H1 (cell line): ENCODE measurements at regions of chr2 and their contacts with region 1.

Region 1: DNA sequence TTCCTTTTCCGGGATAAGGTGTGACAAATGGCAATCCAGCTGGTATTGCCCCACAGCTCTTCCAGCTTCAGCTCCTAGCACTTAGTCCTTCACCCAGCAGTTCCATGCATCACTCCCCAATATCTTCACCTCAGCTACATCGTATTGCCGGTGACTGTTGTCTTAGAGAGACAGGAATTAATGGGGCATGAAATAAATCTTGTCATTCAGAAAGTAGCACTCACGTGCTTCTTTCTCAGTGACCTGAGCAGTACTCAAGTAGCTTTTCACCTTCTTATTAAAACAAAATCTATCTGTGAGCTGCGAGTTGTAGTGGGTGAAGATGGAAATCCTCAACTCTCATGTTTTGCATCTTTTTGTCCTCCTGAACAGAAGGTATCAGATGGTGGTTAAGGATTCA is 72.8 kb downstream of the PTH2R start:
- DNase-seq: no peak
- H3K4me3 ChIP-seq: no peak overlapping the region
- H3K27ac ChIP-seq: no peak overlapping the region
- H3K4me1 ChIP-seq: no peaks in the 10 kb centered on the region
- H3K27me3 ChIP-seq: no peaks in the 10 kb centered on the region
- CTCF ChIP-seq: no peak
- EP300 ChIP-seq: no peak
- POLR2A ChIP-seq: no peak
- RAD21 ChIP-seq: no peak

Region 2: DNA sequence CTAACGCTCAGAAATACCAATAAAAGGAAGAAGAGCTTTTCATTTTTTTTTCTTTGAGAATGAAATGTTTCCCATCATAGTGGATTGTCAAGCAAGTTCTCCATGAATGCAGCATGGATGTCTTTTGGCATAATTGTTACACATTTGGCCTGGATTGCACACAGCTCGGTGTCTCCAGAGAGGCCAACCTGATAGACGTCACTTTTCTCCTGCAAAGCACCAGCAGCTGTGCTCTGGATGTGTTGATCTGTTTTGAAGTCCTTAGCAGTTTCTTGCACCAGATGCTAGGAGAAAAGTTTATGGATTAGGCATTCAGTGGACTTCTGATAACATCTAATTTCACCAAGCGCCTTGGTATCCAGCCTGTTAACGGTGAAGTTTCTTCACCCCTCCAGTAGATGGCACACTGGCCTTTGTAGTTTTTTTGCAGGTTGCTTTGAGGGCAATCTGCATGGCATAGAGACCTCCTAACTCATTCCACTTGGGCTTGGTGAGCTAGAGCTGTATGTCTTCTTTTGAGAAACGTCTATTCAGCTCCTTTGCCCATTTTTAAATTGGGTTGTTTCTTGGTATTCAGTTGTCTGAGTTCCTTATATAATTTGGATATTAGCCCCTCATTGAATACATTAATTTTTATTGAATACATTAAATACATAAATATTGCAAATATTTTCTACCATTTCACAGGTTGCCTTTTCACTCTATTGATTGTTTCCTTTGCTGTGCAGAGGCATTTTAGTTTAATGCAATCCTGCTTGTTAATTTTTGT is 13.0 kb before region 1 on chr2:
- CTCF ChIA-PET with region 1: interaction called, 11 read pairs
- POLR2A ChIA-PET with region 1: no interaction called
- DNase-seq: peak; percentile 10 to 57
- H3K4me3 ChIP-seq: no peak overlapping the region
- H3K27ac ChIP-seq: no peak overlapping the region
- H3K4me1 ChIP-seq: no peaks in the 10 kb centered on the region
- H3K27me3 ChIP-seq: peaks cover 0 to 3% (median 0%) of the 10 kb centered on the region in 4 experiments; a peak in 2 of 7 replicates
- CTCF ChIP-seq: peak in 2 of 3 experiments; percentile 81 to 90; a peak in 3 of 4 replicates
- EP300 ChIP-seq: no peak
- POLR2A ChIP-seq: no peak
- RAD21 ChIP-seq: peak; percentile 97 to 98